Activated CD4-positive, alpha-beta T cell treated with anti-CD3 and anti-CD28 coated beads for 36 hours (primary cell): ENCODE measurements at regions of chr12 and their contacts with region 1.

Region 1: GRCh38 chr12:47828608-47829536 is 9.2 kb upstream of the HDAC7 start:
- DNase-seq: peak; percentile 55
- ATAC-seq: no peak
- H3K4me3 Mint-ChIP-seq: peak overlapping the region; percentile 71
- H3K27ac Mint-ChIP-seq: peak overlapping the region; percentile 92
- H3K4me1 Mint-ChIP-seq: peaks cover 91% of the 10 kb centered on the region
- H3K27me3 Mint-ChIP-seq: no peaks in the 10 kb centered on the region

Region 2: DNA sequence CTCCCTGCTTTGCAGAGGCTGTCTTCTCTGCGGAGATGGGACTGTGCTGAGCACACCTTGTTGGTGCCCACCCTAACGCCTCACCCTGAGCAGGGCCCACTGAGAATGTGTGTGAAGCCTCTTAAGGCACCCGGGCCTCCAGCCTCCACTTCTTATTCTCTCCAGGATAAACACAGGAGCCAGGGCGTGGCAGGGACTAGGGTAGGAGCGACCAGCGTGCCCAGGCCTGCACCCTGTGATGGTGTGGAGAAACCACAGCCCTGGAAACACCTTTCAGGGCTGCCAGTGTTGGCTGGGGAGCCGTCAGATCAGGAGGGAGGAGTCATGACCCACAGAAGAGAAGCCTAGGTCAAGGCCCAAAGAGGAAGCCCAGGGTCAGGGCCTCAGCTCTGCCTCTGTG is 34.6 kb after region 1 on chr12:
- CTCF ChIA-PET with region 1: interaction called, 7 read pairs
- POLR2A ChIA-PET with region 1: interaction called, 10 read pairs
- intact Hi-C with region 1: loop called in 1 of 2 experiments (anchors 1 kb)
- DNase-seq: no peak
- ATAC-seq: no peak
- H3K4me3 Mint-ChIP-seq: no peak overlapping the region
- H3K27ac Mint-ChIP-seq: peak overlapping the region; percentile 31
- H3K4me1 Mint-ChIP-seq: peaks cover 73% of the 10 kb centered on the region
- H3K27me3 Mint-ChIP-seq: no peaks in the 10 kb centered on the region